ENCODE measurements at regions of chr9 and their contacts with region 1.

Region 1: GRCh38 chr9:134602547-134603309 is 38.9 kb upstream of the COL5A1 start:
- DNase-seq: peak; percentile 88 to 92
- ATAC-seq: peak; percentile 89 to 94
- H3K4me3 ChIP-seq: no peak overlapping the region
- H3K27ac ChIP-seq: peak overlapping the region; percentile 94 to 96
- H3K4me1 ChIP-seq: peaks cover 36% of the 10 kb centered on the region
- CTCF ChIP-seq: no peak
- EP300 ChIP-seq: peak; percentile 84 to 93; a peak in 4 of 5 replicates
- POLR2A ChIP-seq: no peak
- RAD21 ChIP-seq: peak; percentile 16 to 60; a peak in 4 of 5 replicates

Region 2: DNA sequence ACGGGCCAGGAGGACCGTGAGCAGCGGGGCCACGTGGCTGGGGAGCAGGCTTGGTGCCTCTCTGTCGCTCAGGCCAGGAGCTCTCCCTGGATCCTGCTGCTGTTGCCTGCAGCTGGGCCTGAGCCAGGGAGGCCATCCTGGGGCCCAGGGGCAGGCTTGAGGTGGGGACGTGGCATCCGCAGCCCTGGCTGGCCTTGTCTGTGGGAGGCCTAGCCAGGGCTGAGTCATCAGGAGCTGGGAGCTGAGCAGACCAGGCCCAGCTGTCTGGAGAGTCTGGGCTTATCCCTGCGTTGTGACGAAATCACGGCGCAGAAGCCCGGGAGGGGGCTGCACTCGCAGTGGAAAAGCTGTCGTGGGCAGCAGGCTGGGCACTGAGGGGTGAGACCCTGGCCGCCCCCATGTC is 99.9 kb before region 1 on chr9:
- CTCF ChIA-PET with region 1: interaction called, 11 read pairs
- POLR2A ChIA-PET with region 1: interaction called, 5 read pairs
- DNase-seq: peak; percentile 87 to 98
- ATAC-seq: peak; percentile 100
- H3K4me3 ChIP-seq: no peak overlapping the region
- H3K27ac ChIP-seq: peak overlapping the region; percentile 92 to 93
- H3K4me1 ChIP-seq: peaks cover 19% of the 10 kb centered on the region
- CTCF ChIP-seq: no peak
- EP300 ChIP-seq: peak in 1 of 2 experiments; percentile 20; a peak in 1 of 5 replicates
- POLR2A ChIP-seq: peak; percentile 24; the same call in 1 of the 2 replicates
- RAD21 ChIP-seq: peak in 1 of 2 experiments; percentile 32; a peak in 2 of 5 replicates

Region 3: GRCh38 chr9:134624827-134625181 is 22.1 kb after region 1 on chr9:
- CTCF ChIA-PET with region 1: interaction called, 5 read pairs
- POLR2A ChIA-PET with region 1: interaction called, 10 read pairs
- DNase-seq: peak; percentile 71 to 72
- ATAC-seq: peak; percentile 80 to 93
- H3K4me3 ChIP-seq: no peak overlapping the region
- H3K27ac ChIP-seq: peak overlapping the region; percentile 87 to 88
- H3K4me1 ChIP-seq: peaks cover 49% of the 10 kb centered on the region
- CTCF ChIP-seq: no peak
- EP300 ChIP-seq: peak; percentile 46 to 74; a peak in 2 of 5 replicates
- POLR2A ChIP-seq: no peak
- RAD21 ChIP-seq: peak; percentile 25 to 30; a peak in 3 of 5 replicates

Region 4: DNA sequence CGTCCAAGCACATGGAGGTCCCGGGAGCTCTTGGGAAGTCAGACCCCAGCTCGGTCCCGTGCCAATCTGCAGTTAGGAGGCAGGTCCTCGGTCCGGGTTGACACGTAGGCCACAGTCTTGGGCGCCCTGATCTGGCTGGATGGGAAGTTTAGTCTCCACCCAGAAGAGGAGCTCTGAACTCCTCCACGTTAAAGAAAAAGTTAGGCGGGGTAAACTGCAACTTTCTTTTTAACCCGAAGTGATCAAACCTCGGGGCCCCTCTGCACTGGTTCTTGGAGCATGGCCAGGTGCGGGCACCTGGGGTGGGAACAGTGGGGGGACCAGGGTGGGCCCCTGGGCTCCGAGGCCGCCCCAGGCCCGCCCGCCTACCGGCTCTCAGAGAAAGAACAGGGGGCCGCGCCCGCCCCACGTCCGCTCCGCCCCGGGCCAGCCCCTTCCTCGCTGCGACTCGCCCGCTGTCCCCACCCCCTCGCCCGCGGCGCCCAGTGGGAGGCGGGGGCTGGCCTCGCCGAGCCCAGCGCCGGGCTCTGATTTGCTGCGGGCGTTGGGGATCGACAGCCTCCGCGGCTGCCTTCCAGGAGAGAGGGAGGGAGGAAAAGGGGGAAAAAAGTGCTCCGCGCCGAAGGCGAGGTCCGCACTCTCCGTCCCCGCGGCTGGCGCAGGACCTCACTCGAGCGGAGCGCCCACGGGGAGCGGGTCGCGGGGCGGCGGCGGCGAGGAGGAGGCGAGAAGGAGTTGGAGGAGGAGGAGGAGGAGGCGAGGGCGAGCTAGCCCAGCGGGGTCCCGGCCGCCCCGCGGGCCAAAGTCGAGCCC is 38.7 kb after region 1 on chr9 and contains the start of gene COL5A1:
- CTCF ChIA-PET with region 1: interaction called, 12 read pairs
- POLR2A ChIA-PET with region 1: interaction called, 8 read pairs
- DNase-seq: peak; percentile 84
- ATAC-seq: peak; percentile 74 to 90
- H3K4me3 ChIP-seq: peak within 1 kb of the TSS; percentile 73
- H3K27ac ChIP-seq: peak within 1 kb of the TSS; percentile 78 to 93
- H3K4me1 ChIP-seq: peaks cover 55% of the 10 kb centered on the region
- CTCF ChIP-seq: no peak
- EP300 ChIP-seq: no peak
- POLR2A ChIP-seq: peak; percentile 72
- RAD21 ChIP-seq: 0 out of 5 replicates have a peak, but pooled peaks of 1 of the 2 experiments have one; percentile 10
- polyA plus RNA-seq, gene COL5A1: 15.2 and 16.1 TPM in 2 replicates

Measured in A549 (cell line).